ENCODE measurements at regions of chr7 and their contacts with region 1.

Region 1: DNA sequence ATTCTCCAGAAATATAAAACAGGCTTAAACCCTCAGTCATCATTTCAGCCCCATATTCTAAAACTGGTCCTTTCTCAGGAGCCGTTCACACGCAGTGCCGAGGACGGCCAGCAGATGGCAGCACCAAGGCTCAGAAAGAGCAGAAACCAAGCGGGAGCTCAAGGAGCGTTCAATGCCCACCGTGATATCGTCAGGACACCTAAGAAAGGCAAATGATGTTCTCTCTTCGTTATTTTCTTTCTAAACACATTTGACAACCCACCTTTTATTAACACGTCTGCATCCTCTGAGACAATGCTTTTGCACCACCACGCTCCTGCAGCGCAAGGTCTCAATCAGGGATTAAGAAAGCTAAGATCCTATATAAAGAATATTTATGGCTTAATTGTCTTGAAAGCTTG is 45.7 kb upstream of the RBM33 start:
- DNase-seq: peak; percentile 92

Region 2: DNA sequence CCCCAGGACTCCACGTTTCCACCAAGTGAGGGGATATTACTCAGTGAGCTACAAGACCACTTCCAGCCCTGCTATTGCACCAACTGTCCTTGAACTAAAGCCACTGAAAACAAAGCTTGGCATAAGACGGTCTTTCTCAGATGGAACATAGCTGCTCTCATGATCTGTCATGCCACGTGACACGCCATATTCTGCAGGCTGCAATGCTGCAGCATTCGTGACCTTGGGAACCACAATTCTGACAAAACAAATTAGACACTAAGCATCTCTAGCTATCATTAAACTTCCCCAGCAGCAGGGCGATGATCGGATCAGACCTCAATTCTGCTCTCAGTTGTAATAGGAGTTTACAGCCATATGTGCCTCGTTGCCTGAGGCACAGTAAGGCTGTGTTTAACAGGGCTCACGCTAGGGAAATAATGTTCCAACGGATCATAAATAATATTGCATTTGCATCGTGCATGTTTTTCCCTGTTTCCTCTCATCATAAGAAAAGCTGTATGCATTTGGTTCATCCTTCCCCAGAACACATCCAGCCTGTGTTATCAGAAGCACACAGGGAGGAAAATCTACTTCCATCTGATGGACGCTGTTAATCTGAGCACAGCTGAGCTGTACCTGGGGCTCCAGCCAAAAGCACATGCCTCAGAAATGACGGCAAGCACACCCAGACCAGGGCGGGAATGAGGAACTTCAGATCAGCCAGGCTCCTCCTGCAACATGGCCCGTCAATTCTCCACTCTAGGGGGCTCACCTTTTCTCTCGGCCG is 13.9 kb before region 1 on chr7:
- CTCF ChIA-PET with region 1: interaction called, 19 read pairs
- POLR2A ChIA-PET with region 1: no interaction called
- DNase-seq: no peak

Region 3: DNA sequence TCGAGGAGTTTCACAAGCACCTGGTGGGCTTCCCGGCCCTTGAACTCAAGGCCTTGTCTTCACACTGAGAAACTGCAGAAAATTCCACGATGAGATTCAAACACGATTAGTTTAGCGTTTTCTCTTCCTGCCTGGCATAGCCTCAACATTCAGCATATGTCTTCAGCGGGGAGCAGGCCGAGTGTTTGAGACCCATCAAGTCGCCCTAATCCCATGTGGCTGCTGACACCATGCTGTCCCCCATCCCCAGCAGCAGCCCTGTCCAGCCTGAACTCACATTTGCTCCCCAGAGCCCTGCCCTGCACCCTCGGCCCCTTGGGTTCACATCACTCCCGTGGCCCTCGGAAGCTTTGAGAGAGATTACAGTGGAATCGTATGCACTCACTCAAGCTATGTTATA is 10.4 kb after region 1 on chr7:
- CTCF ChIA-PET with region 1: interaction called, 16 read pairs
- POLR2A ChIA-PET with region 1: no interaction called
- DNase-seq: no peak

Region 4: DNA sequence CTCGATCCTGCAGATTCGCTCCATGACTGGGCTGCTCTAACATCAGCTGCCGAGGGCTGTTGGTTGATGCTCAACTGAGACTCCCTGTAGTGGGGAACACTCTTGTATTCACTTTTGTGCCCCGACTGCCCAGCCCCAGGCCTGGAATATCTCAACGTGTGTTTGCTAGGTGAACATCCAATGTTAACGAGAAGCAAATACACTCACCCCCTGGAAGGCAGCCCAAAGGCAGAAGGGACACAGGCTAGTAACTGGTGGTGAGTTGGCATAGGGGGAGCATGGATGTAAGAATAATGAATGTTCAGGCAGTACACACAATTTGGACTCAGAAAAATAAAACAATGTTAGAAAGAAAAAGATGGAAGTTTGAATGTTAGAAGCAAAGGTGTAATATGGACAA is 21.7 kb after region 1 on chr7:
- CTCF ChIA-PET with region 1: interaction called, 11 read pairs
- POLR2A ChIA-PET with region 1: no interaction called
- DNase-seq: no peak

Region 5: GRCh38 chr7:155766966-155767916 is 168.4 kb after region 1 on chr7:
- CTCF ChIA-PET with region 1: interaction called, 21 read pairs
- POLR2A ChIA-PET with region 1: no interaction called
- DNase-seq: no peak

Measured in HEK293T (cell line).